Activated B cell treated with CpG ODN at 0.5 μM for 24 hours (primary cell): ENCODE measurements at regions of chr10 and their contacts with region 1.

Region 1: DNA sequence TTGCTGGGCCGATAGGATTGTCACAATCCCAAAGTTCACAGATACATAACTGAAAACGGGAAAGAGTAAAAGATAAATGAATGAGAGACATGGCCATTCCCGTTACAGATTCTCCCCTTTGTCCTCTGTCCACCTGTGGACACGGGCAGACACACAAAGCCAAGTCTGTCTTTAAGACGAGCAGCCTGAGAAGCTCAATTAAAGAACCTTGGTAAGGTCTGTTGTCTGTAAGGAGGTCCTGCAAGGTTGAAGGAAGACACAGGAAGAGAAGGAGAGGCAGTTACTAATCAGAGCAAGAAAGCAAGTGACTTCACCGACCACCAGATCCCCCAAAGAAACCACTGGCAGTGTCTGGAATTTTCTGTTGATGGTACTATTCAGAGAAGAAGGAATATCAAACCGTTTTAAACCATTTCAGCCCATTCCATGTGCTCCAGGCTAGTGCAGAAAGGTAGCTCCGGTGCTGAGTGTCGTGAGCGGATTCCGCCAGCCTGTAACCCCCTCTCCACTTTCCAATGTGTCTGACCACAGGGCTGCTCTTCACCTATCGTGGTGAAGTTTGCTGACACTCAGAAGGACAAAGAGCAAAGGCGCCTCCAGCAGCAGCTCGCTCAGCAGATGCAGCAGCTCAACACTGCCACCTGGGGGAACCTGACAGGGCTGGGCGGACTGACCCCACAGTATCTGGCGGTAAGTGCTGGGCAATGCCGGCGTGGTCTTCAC is 252.6 kb downstream of the CELF2 start:
- DNase-seq: peak; percentile 57
- ATAC-seq: peak; percentile 89
- H3K4me3 Mint-ChIP-seq: peak overlapping the region; percentile 28
- H3K27ac Mint-ChIP-seq: peak overlapping the region; percentile 77
- H3K4me1 Mint-ChIP-seq: peaks cover 64% of the 10 kb centered on the region
- H3K27me3 Mint-ChIP-seq: no peaks in the 10 kb centered on the region
- CTCF ChIP-seq: no peak

Region 2: DNA sequence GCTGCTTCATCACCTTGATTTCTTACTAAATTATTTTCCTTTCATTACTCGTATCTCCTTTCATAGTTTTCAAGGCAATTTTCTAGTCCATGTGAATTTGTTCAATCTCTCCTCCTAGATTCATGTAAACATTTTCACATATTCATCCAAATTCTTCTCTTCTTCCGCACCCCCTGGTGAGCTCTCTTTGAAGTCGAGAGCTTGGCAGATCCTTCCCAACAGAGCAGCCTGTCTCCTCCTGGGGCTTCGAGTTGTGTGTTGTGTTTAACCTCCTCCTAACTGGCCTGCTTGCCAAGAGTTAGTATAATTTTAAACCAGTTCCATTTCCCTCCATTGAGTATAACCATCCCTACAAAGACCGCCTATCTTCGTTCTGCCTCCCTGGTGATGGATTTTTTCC is 525.0 kb before region 1 on chr10:
- CTCF ChIA-PET with region 1: no interaction called
- POLR2A ChIA-PET with region 1: no interaction called
- intact Hi-C with region 1: loop called (anchors 10 kb)
- DNase-seq: no peak
- ATAC-seq: no peak
- H3K4me3 Mint-ChIP-seq: no peak overlapping the region
- H3K27ac Mint-ChIP-seq: no peak overlapping the region
- H3K4me1 Mint-ChIP-seq: no peaks in the 10 kb centered on the region
- H3K27me3 Mint-ChIP-seq: no peaks in the 10 kb centered on the region
- CTCF ChIP-seq: no peak

Region 3: DNA sequence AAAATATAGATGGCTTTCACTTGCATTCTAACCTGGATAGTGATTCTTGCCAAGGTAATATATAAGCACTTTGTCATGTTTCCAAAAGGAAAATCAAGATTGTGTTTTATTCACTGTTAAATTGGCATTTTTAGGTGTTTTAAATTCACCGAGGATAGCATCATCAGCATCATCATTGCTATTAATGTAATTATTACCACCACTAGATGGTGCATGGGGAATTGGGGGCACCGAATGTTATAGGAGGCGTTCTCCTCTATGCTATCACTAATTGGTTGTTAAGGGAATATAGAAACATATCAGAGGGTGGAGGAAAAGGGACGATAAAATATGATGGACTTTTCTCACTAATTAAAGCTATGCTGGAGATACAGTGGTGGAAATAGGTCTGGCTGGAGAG is 157.1 kb before region 1 on chr10:
- CTCF ChIA-PET with region 1: interaction called, 53 read pairs
- POLR2A ChIA-PET with region 1: interaction called, 6 read pairs
- intact Hi-C with region 1: loop called (anchors 1 kb)
- DNase-seq: no peak
- ATAC-seq: peak; percentile 73
- H3K4me3 Mint-ChIP-seq: no peak overlapping the region
- H3K27ac Mint-ChIP-seq: no peak overlapping the region
- H3K4me1 Mint-ChIP-seq: peaks cover 9% of the 10 kb centered on the region
- H3K27me3 Mint-ChIP-seq: no peaks in the 10 kb centered on the region
- CTCF ChIP-seq: no peak

Region 4: GRCh38 chr10:11178606-11179515 is 91.4 kb before region 1 on chr10:
- CTCF ChIA-PET with region 1: interaction called, 16 read pairs
- POLR2A ChIA-PET with region 1: no interaction called
- intact Hi-C with region 1: loop called (anchors 1 kb)
- DNase-seq: peak; percentile 43
- ATAC-seq: peak; percentile 75
- H3K4me3 Mint-ChIP-seq: peak overlapping the region; percentile 80
- H3K27ac Mint-ChIP-seq: peak overlapping the region; percentile 94
- H3K4me1 Mint-ChIP-seq: peaks cover 30% of the 10 kb centered on the region
- H3K27me3 Mint-ChIP-seq: no peaks in the 10 kb centered on the region
- CTCF ChIP-seq: no peak